ENCODE measurements at regions of chr1 and their contacts with region 1.

Region 1: GRCh38 chr1:245169376-245169775 is 14.6 kb downstream of the KIF26B start:
- DNase-seq: no peak
- H3K4me3 ChIP-seq: no peak overlapping the region
- H3K27ac ChIP-seq: no peak overlapping the region
- H3K4me1 ChIP-seq: no peaks in the 10 kb centered on the region
- H3K27me3 ChIP-seq: peaks cover 95% of the 10 kb centered on the region
- CTCF ChIP-seq: no peak

Region 2: DNA sequence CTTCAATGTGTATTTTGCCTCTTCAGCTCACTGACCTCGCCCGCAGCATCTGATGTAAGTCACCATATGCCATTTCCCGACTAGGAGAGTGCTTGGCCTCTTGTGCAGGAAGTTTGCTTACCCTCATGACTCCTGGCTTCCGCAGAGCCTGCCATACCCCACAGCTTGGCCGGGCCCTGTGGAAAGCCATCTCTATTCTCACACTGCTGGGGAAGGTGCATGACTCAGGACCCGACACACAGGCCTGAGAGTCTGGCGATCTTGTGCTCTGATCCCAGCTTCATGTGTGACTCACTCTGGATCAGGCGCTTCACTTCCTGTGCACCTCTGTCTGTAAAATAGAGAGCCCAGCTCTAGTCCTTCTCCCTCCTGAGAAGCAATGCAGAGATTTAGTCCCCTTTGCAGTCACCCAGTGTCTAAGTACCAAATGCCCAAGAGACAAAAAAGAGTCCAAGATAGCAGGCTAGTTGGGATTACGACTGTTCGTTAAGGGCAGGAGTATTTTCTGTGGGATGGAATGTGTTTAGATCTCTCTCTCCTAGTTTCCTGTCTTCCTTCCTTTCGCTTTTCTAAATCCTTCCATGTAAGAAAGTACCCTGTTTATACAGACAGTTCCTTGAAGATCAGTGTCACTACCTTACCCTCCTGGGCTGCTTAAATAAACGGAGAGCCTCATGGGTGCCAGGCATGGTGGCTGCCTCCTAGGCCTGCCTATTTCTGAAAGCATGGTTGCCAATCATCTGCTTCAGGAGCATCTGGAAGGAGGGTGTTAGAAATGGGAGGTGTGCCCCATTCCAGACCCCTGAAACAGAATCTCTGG is 77.3 kb before region 1 on chr1:
- CTCF ChIA-PET with region 1: no interaction called
- POLR2A ChIA-PET with region 1: no interaction called
- intact Hi-C with region 1: no loop called
- DNase-seq: peak; percentile 67 to 72
- H3K4me3 ChIP-seq: no peak overlapping the region
- H3K27ac ChIP-seq: peak overlapping the region; percentile 31
- H3K4me1 ChIP-seq: no peaks in the 10 kb centered on the region
- H3K27me3 ChIP-seq: peaks cover 45% of the 10 kb centered on the region
- CTCF ChIP-seq: no peak

Region 3: DNA sequence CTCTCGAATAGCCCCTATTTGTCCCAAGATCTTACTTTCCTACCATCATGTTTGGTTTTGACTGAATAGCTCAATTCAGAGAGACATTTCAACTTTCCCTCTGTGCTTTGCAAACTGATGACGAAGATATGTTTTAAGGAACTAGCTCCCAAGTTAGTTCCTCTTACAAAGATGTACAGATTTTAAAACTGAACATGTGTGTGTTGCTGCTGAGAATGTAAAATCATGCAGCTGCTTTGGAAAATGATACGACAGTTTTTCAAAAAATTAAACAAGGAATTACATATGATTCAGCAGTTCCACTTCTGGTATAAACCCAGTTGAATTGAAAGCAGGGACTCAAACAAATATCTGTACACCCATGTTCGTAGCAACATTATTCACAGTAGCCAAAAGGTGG is 19.0 kb after region 1 on chr1:
- CTCF ChIA-PET with region 1: interaction called, 12 read pairs
- POLR2A ChIA-PET with region 1: no interaction called
- intact Hi-C with region 1: no loop called
- DNase-seq: no peak
- H3K4me3 ChIP-seq: no peak overlapping the region
- H3K27ac ChIP-seq: no peak overlapping the region
- H3K4me1 ChIP-seq: no peaks in the 10 kb centered on the region
- H3K27me3 ChIP-seq: peaks cover 40% of the 10 kb centered on the region
- CTCF ChIP-seq: no peak

Region 4: DNA sequence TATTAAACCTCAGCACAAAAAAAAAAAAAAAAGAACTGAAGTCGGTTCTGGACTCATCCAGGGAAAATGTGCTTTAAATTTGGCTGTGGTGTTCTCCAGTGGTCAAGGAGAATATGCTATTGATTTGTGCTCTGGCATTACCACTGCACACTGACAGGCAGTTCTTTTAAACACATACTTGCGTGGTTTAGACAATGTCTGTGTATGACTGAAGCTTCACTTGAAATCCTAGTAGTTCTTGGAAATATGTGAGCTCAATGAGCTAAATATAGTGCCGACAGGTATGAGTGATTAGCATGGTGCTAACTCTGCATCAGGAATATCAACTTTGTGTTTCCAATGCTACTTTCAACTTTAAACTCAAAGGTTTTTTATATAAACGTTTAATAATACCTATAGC is 922.1 kb after region 1 on chr1:
- CTCF ChIA-PET with region 1: no interaction called
- POLR2A ChIA-PET with region 1: no interaction called
- intact Hi-C with region 1: no loop called
- DNase-seq: no peak
- H3K4me3 ChIP-seq: no peak overlapping the region
- H3K27ac ChIP-seq: no peak overlapping the region
- H3K4me1 ChIP-seq: no peaks in the 10 kb centered on the region
- H3K27me3 ChIP-seq: no peaks in the 10 kb centered on the region
- CTCF ChIP-seq: no peak